Activated naive CD4-positive, alpha-beta T cell treated with anti-CD3 and anti-CD28 coated beads for 36 hours (primary cell): ENCODE measurements at regions of chr3 and their contacts with region 1.

Region 1: GRCh38 chr3:170221924-170222646 is at the start of gene PRKCI:
- DNase-seq: peak; percentile 95
- H3K4me3 Mint-ChIP-seq: peak within 1 kb of the TSS; percentile 78
- H3K27ac Mint-ChIP-seq: peak within 1 kb of the TSS; percentile 92
- H3K4me1 Mint-ChIP-seq: peaks cover 24% of the 10 kb centered on the region
- H3K27me3 Mint-ChIP-seq: no peaks in the 10 kb centered on the region
- total RNA-seq, gene PRKCI: 20.8 to 23.0 TPM

Region 2: DNA sequence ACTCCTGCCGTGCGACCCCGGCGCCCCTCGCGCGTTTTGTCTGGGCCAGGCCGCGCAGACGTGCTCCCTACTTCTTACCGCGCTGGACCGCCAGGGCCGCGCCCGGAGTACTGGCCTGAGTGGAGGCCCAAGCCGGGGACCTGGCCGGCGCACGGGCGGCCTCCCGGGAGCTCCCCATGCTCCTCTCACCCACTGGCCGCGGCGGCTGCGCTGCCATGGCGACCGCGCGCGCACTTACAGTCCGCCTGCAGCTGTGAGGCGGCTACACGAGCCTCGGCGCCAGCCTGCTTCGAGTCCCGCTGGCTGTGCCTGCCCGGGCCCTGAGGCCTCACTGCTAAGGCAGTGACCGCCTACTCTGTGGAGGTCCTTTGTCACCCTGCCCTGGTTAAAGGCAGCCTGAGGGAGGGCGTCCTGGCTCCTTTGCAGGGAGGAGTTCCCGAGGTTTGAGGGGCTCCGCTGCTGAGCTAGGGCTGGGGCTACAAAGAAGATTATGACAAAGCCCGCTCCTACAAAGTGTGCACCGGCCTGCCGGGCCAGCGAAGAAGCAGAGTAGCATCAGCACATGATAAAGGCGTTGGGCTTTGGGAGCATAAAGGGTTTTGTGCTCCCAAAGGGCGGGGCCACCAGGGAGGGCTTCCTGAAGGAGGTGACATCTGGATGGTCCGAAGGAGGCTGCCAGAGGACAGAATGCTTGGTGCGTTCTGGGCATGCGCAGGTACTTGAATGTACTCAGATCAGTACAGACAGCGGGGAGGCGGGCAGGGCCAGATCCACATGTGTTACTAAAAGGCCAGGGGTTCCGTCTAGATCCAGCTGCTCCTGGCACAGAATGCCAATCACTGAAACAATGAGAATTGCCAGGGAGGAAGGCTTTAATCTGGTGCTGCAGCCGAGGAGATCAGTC is 409.5 kb before region 1 on chr3 and contains the starts of genes LRRC34 and LRRIQ4:
- CTCF ChIA-PET with region 1: no interaction called
- intact Hi-C with region 1: loop called (anchors 1 kb)
- DNase-seq: peak; percentile 91
- H3K4me3 Mint-ChIP-seq: peak within 1 kb of the TSS; percentile 82
- H3K27ac Mint-ChIP-seq: peak within 1 kb of the TSS; percentile 79
- H3K4me1 Mint-ChIP-seq: peaks cover 19% of the 10 kb centered on the region
- H3K27me3 Mint-ChIP-seq: no peaks in the 10 kb centered on the region
- total RNA-seq, gene LRRC34: 3.8 to 3.9 TPM
- total RNA-seq, gene LRRIQ4: 0.12 TPM in 1 of 2 experiments, not detected in the other

Region 3: DNA sequence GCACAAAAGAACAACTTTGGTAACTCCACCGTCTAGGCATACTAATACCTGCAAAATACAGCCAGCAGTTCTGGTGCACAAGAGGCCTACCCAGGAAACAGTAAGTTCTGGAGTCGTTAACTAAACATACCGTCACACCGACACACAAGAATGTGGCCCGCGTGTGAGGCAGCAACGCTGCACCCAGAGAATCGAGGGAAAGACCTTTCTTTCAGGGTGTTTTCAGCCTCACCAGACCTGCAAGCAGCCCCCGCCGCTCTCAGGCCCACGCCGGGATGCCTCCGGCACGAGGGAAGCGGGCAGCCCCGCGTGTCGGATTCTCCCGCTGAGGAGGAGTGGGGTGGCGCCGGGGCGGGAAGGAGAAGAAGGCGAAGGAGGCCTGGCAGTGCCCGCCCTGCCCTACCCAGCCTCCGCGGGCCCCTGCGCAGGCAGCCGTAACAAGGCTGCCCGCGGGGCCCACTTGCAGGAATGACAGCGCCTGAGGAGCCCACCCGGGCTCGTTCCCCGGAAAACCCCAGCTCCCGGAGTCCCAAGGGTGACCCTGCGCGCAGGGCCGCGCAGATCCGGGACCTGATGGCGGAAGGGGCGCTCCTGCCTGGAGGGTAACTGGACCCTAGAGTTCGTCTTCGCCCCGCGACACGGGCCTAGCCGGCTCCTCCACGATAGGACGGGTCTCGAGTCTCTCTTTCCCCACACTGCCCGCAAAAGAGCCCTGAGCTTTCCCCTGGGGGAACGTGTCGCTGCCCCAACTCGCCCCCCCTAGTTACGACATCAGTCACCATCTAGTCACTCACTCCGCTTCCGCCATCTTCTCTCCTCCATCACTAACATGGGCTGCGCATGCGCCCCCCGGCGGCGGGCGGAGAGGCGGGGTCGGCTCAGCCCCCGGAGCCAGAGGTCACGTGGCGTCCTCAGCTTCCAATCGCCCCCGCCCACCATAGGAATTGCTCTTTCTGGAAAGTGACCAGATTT is 40.9 kb before region 1 on chr3 and contains the start of gene PHC3:
- CTCF ChIA-PET with region 1: interaction called, 4 read pairs
- intact Hi-C with region 1: loop called (anchors 1 kb)
- DNase-seq: peak; percentile 93
- H3K4me3 Mint-ChIP-seq: peak within 1 kb of the TSS; percentile 97
- H3K27ac Mint-ChIP-seq: peak within 1 kb of the TSS; percentile 100
- H3K4me1 Mint-ChIP-seq: peaks cover 23% of the 10 kb centered on the region
- H3K27me3 Mint-ChIP-seq: no peaks in the 10 kb centered on the region
- total RNA-seq, gene PHC3: 48.7 to 50.4 TPM

Region 4: DNA sequence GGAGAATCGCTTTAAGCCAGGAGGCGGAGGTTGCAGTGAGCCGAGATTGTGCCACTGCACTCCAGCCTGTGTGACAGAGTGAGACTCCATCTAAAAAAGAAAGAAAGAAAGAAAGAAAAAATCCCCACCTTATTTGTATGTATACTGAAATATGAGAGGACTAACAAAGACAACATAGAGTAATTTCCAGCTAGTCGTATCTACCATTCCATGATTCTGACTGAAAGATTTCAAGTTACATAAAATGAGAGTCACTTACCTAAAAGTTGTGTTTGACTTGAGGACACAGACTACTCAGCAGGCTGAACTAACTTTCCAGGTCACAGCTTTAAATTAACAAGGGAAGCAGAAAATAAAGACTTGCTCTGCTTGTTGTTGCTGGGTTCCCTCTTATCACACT is 18.6 kb before region 1 on chr3:
- CTCF ChIA-PET with region 1: no interaction called
- intact Hi-C with region 1: loop called (anchors 1 kb)
- DNase-seq: no peak
- H3K4me3 Mint-ChIP-seq: no peak overlapping the region
- H3K27ac Mint-ChIP-seq: peak overlapping the region; percentile 42
- H3K4me1 Mint-ChIP-seq: peaks cover 15% of the 10 kb centered on the region
- H3K27me3 Mint-ChIP-seq: peaks cover 3% of the 10 kb centered on the region

Region 5: DNA sequence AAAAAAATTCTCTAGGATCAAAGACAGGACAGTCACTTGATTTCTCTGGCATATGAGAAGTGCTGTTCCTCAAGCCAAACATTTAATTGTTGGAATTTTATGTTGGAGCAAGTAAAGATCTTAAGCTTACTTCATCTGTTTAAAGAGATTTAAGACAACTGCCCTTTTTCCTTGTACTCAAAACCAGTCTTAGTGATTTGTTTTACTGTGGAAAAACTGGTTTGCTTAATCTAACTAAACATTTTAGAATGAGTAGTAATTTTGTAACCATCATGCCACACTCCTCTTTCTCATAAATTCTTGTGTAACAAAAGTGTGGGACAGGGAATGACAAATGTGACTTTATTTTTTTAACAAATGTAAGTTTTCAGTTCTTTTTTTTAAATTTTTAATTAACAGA is 18.6 kb after region 1 on chr3:
- CTCF ChIA-PET with region 1: no interaction called
- intact Hi-C with region 1: no loop called
- DNase-seq: no peak
- H3K4me3 Mint-ChIP-seq: no peak overlapping the region
- H3K27ac Mint-ChIP-seq: no peak overlapping the region
- H3K4me1 Mint-ChIP-seq: no peaks in the 10 kb centered on the region
- H3K27me3 Mint-ChIP-seq: no peaks in the 10 kb centered on the region

Region 6: DNA sequence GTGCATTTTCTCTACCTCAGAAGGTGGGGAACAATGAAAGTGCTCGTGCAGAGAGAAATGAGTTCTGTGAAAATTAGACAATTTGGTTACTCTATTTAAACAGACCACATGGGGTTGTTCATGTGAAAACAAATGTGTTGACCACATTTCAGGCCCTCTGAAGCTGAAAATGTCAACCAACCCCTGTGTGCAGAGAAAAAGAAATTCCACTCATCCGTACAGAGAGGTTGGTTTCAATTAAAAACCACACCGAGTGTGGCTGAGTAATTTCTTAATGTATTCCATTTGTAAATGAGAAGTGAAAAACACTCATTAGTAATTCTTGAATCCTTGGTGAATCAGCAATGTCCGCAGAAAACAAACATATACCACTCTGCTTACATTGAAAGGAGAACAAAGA is 410.7 kb after region 1 on chr3:
- CTCF ChIA-PET with region 1: no interaction called
- intact Hi-C with region 1: no loop called
- DNase-seq: no peak
- H3K4me3 Mint-ChIP-seq: no peak overlapping the region
- H3K27ac Mint-ChIP-seq: no peak overlapping the region
- H3K4me1 Mint-ChIP-seq: no peaks in the 10 kb centered on the region
- H3K27me3 Mint-ChIP-seq: peaks cover 4% of the 10 kb centered on the region

Region 7: DNA sequence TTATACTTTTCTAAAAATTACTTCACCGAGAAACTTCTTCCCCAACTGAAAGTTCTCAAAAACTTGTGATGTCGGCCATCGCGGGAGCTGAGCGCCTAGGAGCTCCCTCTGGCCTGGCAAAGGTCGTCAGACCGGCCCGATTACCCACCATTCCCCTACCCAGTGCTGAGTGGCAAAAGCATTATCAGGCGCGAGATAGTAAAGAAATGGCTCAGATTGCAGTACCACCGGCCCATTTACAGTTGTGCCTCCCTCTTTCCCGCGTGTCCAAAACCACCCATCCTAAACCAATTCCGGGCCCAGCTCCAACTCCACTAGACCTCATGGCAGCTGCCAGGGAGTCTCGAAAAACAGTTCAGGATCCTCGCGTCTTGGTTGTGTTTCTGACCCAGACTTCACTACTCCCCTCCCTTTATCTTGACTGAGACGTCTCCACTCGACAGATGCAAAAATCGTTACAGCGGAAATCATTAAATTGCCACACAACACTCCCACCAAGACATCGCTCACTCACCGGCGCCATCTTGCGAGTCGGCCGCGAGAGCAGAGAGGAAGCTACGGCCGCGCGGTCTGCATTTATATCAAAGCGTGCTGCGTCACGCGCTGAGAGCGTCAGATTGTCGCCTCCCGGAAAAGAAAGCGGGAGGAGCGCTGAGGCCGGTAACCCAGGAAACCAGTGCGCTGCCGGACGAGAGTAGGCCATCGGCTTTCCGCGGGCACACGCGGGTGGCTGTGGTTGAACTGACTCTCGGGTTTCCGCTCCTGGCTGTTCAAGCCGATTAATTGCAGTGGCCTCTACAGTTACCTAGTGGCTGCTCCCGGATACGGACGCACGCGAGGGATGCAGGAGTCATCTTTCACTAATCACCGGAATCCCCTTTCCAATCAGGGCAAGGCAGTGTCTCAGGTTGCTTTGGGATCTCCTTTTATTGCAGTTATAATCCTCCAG is 647.8 kb after region 1 on chr3 and contains the start of gene RPL22L1:
- CTCF ChIA-PET with region 1: no interaction called
- intact Hi-C with region 1: loop called (anchors 1 kb)
- DNase-seq: peak; percentile 95
- H3K4me3 Mint-ChIP-seq: peak within 1 kb of the TSS; percentile 94
- H3K27ac Mint-ChIP-seq: peak within 1 kb of the TSS; percentile 98
- H3K4me1 Mint-ChIP-seq: peaks cover 14% of the 10 kb centered on the region
- H3K27me3 Mint-ChIP-seq: no peaks in the 10 kb centered on the region
- total RNA-seq, gene RPL22L1: 480 to 525 TPM